ENCODE measurements at regions of chr1 and their contacts with region 1.

Region 1: DNA sequence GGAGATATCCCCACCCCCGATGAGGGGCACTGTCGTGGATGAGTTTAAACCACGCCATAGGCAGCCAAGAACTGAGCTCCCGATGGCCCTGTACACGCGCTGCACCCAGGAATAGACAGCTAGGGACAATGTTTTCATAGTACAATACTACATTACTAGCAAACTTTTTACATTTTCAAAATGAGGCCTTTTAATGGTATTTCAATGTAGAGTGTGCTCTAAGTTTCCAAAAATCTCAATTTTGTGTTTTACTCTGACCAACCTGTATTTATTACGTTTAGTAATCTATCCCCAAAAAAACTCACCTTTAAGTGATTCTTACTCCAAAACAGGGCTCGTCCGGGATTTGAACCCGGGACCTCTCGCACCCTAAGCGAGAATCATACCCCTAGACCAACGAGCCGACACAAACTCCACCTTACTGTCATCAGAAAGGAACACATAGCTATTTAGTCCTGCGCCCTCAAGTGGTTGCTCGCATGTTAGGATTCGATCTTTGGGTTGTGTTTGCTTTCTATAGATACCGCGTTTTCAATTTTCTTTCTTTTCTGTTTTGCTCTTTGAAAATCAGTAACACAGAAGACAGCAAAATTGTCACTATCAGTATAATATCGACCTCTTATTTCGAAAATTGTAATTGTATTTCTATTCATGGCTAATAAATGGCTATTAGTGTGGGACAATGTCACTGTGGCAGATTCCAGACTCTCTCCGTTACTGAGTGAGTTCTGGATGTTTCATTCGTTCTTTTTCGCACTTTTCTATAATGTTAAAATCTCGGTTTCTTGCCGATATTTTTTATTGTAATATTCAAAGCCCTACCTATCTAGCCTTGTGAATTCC is 6.4 kb upstream of the MPZL1 start:
- DNase-seq: peak; percentile 94
- H3K4me3 Mint-ChIP-seq: peak overlapping the region; percentile 79
- H3K27ac Mint-ChIP-seq: peak overlapping the region; percentile 96
- H3K4me1 Mint-ChIP-seq: peaks cover 65% of the 10 kb centered on the region
- H3K27me3 Mint-ChIP-seq: peaks cover 25% of the 10 kb centered on the region

Region 2: DNA sequence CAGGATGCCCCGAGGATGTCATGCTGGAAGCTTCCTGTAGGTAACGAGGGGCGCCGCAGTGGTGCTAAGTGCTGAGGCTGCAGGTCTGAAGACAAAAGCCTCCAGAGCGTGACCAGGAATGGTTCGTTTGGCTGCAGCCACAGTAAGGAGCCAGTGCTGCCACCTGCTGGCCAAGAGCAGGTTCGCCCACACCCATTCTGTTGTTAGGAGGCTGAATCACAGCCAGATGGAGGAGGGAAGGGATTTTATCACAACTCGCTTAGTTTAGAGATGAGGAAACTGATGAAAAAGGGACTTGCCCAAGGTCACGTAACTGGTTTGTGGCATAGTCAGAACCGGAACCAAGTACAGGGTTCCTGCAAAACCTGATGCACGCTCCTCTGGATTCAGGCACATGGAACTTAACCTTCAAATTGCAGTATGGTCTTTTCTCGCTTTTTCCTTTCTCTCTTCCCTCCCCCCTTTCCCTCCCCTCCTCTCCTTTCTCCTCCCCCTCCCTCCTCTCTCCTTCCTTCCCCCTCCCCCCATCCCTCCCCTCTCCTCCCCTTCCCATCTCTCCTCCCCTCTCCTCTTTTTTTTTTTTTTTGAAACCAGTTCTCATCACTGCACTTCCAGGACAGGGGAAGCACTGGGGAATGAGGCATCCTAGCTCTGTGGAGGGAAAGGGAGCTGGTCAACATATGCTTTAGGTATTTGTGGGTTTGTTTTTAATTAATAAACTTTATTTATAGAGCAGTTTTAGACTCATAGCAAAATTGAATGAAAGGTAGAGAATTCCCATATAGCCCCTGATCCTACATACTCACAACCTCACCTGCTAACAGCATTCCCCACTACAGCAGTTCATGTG is 88.2 kb after region 1 on chr1:
- CTCF ChIA-PET with region 1: interaction called, 13 read pairs
- DNase-seq: peak; percentile 90
- H3K4me3 Mint-ChIP-seq: peak overlapping the region; percentile 18
- H3K27ac Mint-ChIP-seq: peak overlapping the region; percentile 45
- H3K4me1 Mint-ChIP-seq: peaks cover 33% of the 10 kb centered on the region
- H3K27me3 Mint-ChIP-seq: peaks cover 3% of the 10 kb centered on the region